G401 (cell line): ENCODE measurements at regions of chr5 and their contacts with region 1.

Region 1: GRCh38 chr5:52950686-52951085 is 38.5 kb upstream of the ITGA2 start:
- DNase-seq: no peak

Region 2: GRCh38 chr5:52760695-52761366 is 189.9 kb before region 1 on chr5:
- in situ Hi-C with region 1: no loop called
- DNase-seq: no peak

Region 3: GRCh38 chr5:52989781-52990527 is 39.3 kb after region 1 on chr5:
- in situ Hi-C with region 1: loop called (anchors 5 kb)
- DNase-seq: no peak